Activated CD4-positive, alpha-beta memory T cell treated with anti-CD3 and anti-CD28 coated beads, Interleukin-2, amount 10 ng/mL, durations not matched to agents 7 days and 5 days (primary cell): ENCODE measurements at regions of chr10 and their contacts with region 1.

Region 1: GRCh38 chr10:84147347-84147746 is 8.0 kb downstream of the GHITM start:
- DNase-seq: no peak
- H3K4me3 Mint-ChIP-seq: no peak overlapping the region
- H3K27ac Mint-ChIP-seq: no peak overlapping the region
- H3K4me1 Mint-ChIP-seq: peaks cover 3% of the 10 kb centered on the region
- H3K27me3 Mint-ChIP-seq: no peaks in the 10 kb centered on the region

Region 2: DNA sequence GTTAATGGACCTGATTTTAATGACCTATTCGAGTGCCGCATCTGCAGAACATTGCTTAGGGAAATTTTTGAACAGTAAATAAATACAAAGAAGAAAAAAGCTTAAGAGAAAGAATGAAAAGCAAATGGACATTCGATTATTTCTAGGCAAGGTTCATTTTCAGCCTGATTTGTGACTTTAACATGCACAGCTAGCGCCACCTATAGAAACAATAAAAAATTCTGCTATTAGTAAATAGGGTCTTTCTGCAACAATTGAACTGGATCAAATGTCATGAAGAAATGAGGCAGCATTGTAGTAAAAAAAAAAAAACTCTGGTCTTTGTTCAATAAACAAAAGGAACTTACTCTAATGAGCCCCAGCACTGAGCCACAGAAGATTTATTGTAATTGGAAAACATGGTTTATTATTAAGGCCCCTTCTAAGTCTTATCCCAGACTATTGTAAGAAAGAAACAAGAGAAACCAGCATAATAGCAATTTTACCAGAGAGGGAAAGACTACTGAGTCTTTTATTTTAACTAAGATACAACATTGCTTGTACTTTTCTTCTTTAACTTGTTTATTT is 49.5 kb before region 1 on chr10:
- CTCF ChIA-PET with region 1: no interaction called
- POLR2A ChIA-PET with region 1: no interaction called
- DNase-seq: no peak
- H3K4me3 Mint-ChIP-seq: no peak overlapping the region
- H3K27ac Mint-ChIP-seq: no peak overlapping the region
- H3K4me1 Mint-ChIP-seq: no peaks in the 10 kb centered on the region
- H3K27me3 Mint-ChIP-seq: peaks cover 5% of the 10 kb centered on the region

Region 3: GRCh38 chr10:84163996-84164395 is 16.6 kb after region 1 on chr10:
- CTCF ChIA-PET with region 1: interaction called, 15 read pairs
- POLR2A ChIA-PET with region 1: no interaction called
- DNase-seq: no peak
- H3K4me3 Mint-ChIP-seq: no peak overlapping the region
- H3K27ac Mint-ChIP-seq: no peak overlapping the region
- H3K4me1 Mint-ChIP-seq: no peaks in the 10 kb centered on the region
- H3K27me3 Mint-ChIP-seq: peaks cover 22% of the 10 kb centered on the region

Region 4: DNA sequence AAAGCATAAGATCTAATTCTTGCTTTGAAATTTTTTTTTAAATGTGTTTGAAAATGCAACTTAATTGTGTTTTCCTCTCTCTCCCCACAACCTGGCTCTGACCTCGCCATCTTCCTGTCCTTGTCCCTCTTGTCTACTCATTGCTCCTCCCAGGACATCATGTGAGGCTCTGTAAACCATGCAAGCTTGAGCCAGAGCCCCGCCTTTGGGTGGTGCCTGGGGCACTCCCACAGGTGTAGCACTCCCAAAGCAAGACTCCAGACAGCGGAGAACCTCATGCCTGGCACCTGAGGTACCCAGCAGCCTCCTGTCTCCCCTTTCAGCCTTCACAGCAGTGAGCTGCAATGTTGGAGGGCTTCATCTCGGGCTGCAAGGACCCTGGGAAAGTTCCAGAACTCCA is 37.2 kb after region 1 on chr10:
- CTCF ChIA-PET with region 1: no interaction called
- POLR2A ChIA-PET with region 1: no interaction called
- DNase-seq: no peak
- H3K4me3 Mint-ChIP-seq: no peak overlapping the region
- H3K27ac Mint-ChIP-seq: no peak overlapping the region
- H3K4me1 Mint-ChIP-seq: peaks cover 4% of the 10 kb centered on the region
- H3K27me3 Mint-ChIP-seq: no peaks in the 10 kb centered on the region

Region 5: GRCh38 chr10:84214612-84215235 is 67.4 kb after region 1 on chr10:
- CTCF ChIA-PET with region 1: interaction called, 40 read pairs
- POLR2A ChIA-PET with region 1: no interaction called
- DNase-seq: peak; percentile 55
- H3K4me3 Mint-ChIP-seq: no peak overlapping the region
- H3K27ac Mint-ChIP-seq: no peak overlapping the region
- H3K4me1 Mint-ChIP-seq: no peaks in the 10 kb centered on the region
- H3K27me3 Mint-ChIP-seq: no peaks in the 10 kb centered on the region

Region 6: DNA sequence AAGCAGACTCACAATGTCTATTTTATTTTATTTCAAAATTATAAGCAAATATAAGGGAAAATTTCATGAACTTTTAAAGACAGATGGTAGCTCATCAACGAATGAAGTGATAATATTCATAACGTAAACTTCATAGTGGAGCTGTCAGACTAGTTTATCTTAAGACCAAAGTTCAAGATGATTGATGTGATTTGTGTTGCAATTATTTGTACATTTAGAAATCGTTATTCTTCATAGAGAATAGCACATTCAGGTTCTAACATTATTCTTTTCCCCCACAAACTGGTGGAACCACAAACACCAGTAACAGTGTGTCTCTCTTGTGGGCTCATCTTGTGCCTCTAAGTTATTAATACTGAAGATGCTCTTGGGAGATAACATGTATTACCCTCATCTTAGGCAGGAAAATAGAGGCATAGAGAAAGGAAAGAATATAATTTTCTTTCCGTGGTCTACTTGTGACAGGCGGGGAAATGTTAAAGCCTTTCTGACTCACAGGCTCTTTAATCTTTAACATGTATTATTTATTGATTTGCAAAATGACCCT is 218.1 kb after region 1 on chr10:
- CTCF ChIA-PET with region 1: no interaction called
- POLR2A ChIA-PET with region 1: no interaction called
- DNase-seq: no peak
- H3K4me3 Mint-ChIP-seq: no peak overlapping the region
- H3K27ac Mint-ChIP-seq: no peak overlapping the region
- H3K4me1 Mint-ChIP-seq: peaks cover 26% of the 10 kb centered on the region
- H3K27me3 Mint-ChIP-seq: no peaks in the 10 kb centered on the region

Region 7: DNA sequence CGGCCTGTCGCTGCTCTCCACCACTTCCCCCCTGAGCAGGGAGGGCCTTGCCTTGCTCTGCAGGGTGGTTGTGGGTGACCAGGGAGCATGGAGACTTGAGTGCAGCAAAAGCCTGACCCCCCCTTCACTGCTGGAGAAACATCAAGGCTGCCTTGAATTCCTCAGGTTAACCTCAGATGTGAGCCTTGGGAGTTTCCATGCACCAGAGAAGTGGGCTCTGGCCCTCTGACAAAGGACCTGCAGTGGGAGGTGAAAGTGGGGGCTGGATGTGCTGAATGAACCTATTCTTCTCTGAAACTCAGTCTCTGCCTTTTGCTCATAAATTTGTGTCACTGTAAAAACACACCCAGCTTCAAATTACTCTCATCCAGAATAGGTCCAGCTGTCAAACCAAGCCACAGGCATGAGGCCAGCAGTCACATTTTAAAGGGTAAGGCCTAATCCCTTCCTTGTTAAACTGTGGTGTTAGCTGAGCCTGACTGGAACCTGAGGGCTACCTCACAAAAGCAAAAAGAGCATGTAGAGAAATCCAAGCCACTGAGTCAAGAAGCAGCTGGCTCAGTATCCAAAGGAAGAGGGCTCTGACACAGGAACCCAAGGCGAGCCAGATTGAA is 537.8 kb after region 1 on chr10:
- CTCF ChIA-PET with region 1: no interaction called
- POLR2A ChIA-PET with region 1: no interaction called
- DNase-seq: no peak
- H3K4me3 Mint-ChIP-seq: no peak overlapping the region
- H3K27ac Mint-ChIP-seq: no peak overlapping the region
- H3K4me1 Mint-ChIP-seq: no peaks in the 10 kb centered on the region
- H3K27me3 Mint-ChIP-seq: peaks cover 3% of the 10 kb centered on the region